Endothelial cell of umbilical vein (primary cell): ENCODE measurements at regions of chr4 and their contacts with region 1.

Region 1: DNA sequence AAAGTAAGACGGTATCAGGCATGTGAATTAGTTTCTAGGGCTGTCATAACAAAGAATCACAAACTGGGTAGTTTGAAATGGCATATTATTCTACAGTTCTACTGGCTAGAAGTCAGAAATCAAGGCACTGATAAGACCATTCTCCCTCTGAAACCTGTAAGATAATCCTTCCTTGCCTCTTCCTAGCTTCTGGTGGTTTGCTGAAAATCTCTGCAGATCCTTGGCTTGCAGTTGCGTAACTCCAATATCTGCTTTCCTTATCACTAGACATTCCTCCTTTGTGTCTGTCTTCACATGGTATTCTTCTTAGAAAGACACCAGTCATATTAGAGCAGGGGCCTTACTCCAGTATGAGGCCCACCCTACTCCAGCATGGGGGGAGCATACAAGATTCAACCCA is 19.6 kb upstream of the LCORL start:
- DNase-seq: no peak
- H3K4me3 ChIP-seq: no peak overlapping the region
- H3K27ac ChIP-seq: no peak overlapping the region
- H3K4me1 ChIP-seq: no peaks in the 10 kb centered on the region
- H3K27me3 ChIP-seq: no peaks in the 10 kb centered on the region
- CTCF ChIP-seq: no peak
- POLR2A ChIP-seq: no peak

Region 2: GRCh38 chr4:17561195-17561909 is 479.8 kb before region 1 on chr4:
- CTCF ChIA-PET with region 1: no interaction called
- POLR2A ChIA-PET with region 1: no interaction called
- dilution Hi-C with region 1: no loop called
- intact Hi-C with region 1: no loop called
- DNase-seq: no peak
- H3K4me3 ChIP-seq: no peak overlapping the region
- H3K27ac ChIP-seq: no peak overlapping the region
- H3K4me1 ChIP-seq: no peaks in the 10 kb centered on the region
- H3K27me3 ChIP-seq: no peaks in the 10 kb centered on the region
- CTCF ChIP-seq: no peak
- POLR2A ChIP-seq: no peak

Region 3: DNA sequence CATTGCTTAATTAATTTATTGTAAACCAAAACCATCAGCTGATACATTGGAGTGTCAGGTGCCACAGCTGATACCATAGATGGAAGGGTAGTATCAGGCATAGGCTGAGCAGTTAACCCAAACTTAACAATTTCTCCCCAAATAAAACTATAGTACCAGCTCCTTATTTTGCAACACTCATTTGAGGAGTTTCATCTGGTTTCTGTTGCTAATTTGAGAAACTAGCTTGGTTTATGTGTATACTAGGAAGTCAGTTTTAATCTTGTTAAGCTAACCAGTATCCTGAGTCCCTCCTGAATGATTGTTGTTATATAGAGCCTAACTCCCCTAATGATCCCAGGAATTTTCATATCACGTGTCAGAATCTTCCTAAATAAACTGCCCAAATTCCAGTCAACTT is 243.3 kb before region 1 on chr4:
- CTCF ChIA-PET with region 1: no interaction called
- POLR2A ChIA-PET with region 1: no interaction called
- dilution Hi-C with region 1: no loop called
- intact Hi-C with region 1: no loop called
- DNase-seq: no peak
- H3K4me3 ChIP-seq: no peak overlapping the region
- H3K27ac ChIP-seq: no peak overlapping the region
- H3K4me1 ChIP-seq: no peaks in the 10 kb centered on the region
- H3K27me3 ChIP-seq: no peaks in the 10 kb centered on the region
- CTCF ChIP-seq: no peak
- POLR2A ChIP-seq: no peak

Region 4: DNA sequence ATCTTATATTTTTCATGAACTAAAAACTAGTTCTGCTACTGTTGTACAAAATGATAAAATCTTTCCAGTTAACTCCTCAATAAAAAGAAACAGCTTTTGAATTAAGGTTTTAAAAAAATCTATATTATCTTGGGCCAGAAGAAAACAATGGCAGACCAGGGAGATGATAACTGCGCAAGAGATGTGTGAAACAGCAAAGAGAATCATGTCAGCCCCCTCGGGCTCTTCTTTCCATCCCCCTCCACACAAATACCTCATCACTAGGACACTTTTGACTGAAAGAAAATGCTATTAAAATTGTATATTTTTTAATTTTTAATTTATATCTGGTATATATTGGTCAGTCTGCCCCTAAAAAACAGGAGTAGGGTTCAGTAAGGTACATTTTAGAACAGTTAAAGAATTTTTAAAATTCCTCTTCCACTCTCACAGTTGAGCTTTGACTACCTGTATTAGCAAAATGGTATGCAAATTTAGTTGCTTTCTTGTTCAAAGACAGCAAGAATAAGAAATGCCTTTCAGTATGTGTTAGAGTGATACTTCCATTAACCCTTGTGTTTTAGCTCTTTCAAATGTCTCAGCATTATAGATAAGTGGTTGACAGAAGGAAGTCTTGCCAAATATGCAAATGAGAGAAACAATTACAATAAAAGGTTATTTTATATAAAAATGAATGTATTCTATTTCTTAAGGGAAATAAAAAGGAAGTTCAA is 16.9 kb after region 1 on chr4:
- CTCF ChIA-PET with region 1: interaction called, 5 read pairs
- POLR2A ChIA-PET with region 1: no interaction called
- dilution Hi-C with region 1: no loop called
- intact Hi-C with region 1: loop called (anchors 2 kb)
- DNase-seq: no peak
- H3K4me3 ChIP-seq: no peak overlapping the region
- H3K27ac ChIP-seq: no peak overlapping the region
- H3K4me1 ChIP-seq: no peaks in the 10 kb centered on the region
- H3K27me3 ChIP-seq: no peaks in the 10 kb centered on the region
- CTCF ChIP-seq: no peak
- POLR2A ChIP-seq: no peak